ENCODE measurements at regions of chr15 and their contacts with region 1.

Region 1: GRCh38 chr15:62142731-62143130 is 22.4 kb downstream of the C2CD4B start:
- DNase-seq: no peak
- H3K4me3 Mint-ChIP-seq: no peak overlapping the region
- H3K27ac Mint-ChIP-seq: no peak overlapping the region
- H3K4me1 Mint-ChIP-seq: peaks cover 20% of the 10 kb centered on the region
- H3K27me3 Mint-ChIP-seq: no peaks in the 10 kb centered on the region
- CTCF ChIP-seq: peak; percentile 46

Region 2: DNA sequence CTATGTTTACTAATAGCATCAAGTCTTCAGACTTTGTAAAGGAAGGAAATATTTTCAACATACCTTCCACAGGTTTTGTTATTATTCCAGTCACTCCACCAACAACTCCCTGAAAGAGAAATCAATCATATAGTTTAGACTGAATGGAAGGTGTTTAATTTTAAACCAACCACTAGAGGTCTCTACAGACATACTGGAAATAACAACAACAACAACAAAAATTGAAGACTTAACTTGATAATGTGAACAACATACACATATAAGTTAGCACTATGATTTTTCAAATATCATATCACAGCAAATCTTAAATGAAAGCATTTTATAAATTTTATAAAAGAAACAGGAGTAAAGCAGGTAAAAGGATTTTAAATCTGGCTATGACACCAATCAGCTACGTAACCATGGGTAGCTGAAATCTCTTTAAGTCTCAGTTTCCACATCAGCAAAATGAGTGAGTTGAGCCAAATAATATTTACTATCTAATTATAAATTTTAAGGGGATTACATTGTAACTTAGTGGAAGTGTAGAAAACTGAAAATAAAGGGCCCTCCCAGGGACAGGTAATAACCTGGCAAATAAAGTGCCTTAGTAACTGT is 270.7 kb before region 1 on chr15:
- CTCF ChIA-PET with region 1: no interaction called
- intact Hi-C with region 1: loop called (anchors 5 kb)
- DNase-seq: no peak
- H3K4me3 Mint-ChIP-seq: no peak overlapping the region
- H3K27ac Mint-ChIP-seq: no peak overlapping the region
- H3K4me1 Mint-ChIP-seq: peaks cover 23% of the 10 kb centered on the region
- H3K27me3 Mint-ChIP-seq: no peaks in the 10 kb centered on the region
- CTCF ChIP-seq: peak; percentile 38

Region 3: GRCh38 chr15:62066663-62067447 is 75.9 kb before region 1 on chr15 and contains the start of gene C2CD4A:
- CTCF ChIA-PET with region 1: interaction called, 4 read pairs
- intact Hi-C with region 1: loop called (anchors 2 kb)
- DNase-seq: peak; percentile 96
- H3K4me3 Mint-ChIP-seq: peak within 1 kb of the TSS; percentile 89
- H3K27ac Mint-ChIP-seq: peak within 1 kb of the TSS; percentile 91
- H3K4me1 Mint-ChIP-seq: peaks cover 48% of the 10 kb centered on the region
- H3K27me3 Mint-ChIP-seq: no peaks in the 10 kb centered on the region
- CTCF ChIP-seq: no peak
- total RNA-seq, gene C2CD4A: 17.1 and 17.6 TPM in 2 replicates

Region 4: GRCh38 chr15:62209821-62210220 is 67.1 kb after region 1 on chr15:
- CTCF ChIA-PET with region 1: no interaction called
- intact Hi-C with region 1: no loop called
- DNase-seq: peak; percentile 70
- H3K4me3 Mint-ChIP-seq: peak overlapping the region; percentile 65
- H3K27ac Mint-ChIP-seq: peak overlapping the region; percentile 85
- H3K4me1 Mint-ChIP-seq: peaks cover 31% of the 10 kb centered on the region
- H3K27me3 Mint-ChIP-seq: no peaks in the 10 kb centered on the region
- CTCF ChIP-seq: no peak

Region 5: DNA sequence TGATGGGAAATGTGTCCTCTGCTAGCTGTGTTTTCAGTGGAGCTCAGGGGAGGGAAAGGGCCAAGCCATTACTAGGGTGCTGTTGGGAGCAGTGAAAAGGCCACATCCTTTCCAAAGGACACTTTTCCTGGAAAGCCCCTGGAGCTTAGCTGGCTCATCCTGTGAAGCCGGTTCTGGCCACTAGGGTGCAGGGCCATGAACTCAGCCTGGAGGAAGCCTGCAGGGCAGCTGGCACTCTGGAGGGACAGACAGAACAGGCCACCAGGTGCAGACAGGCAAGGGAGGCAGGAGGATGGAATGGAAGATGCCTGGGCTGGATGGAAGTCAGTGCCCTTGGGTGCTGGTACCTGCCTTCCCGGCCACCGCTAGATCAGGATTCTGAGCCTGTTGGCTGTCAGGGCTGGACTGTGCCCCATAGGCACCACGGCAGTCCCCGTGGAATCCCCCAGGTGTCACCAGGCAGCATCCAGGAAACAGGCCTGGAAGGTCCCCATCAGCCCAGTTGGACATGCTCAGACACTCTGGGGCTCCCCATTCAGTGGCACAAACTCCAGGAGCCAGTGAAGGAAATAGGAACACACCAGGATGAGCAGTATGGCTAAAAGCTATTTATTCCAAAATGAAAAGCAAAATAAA is 98.5 kb after region 1 on chr15:
- CTCF ChIA-PET with region 1: no interaction called
- intact Hi-C with region 1: no loop called
- DNase-seq: peak; percentile 63
- H3K4me3 Mint-ChIP-seq: no peak overlapping the region
- H3K27ac Mint-ChIP-seq: no peak overlapping the region
- H3K4me1 Mint-ChIP-seq: peaks cover 31% of the 10 kb centered on the region
- H3K27me3 Mint-ChIP-seq: no peaks in the 10 kb centered on the region
- CTCF ChIP-seq: peak; percentile 44